Motor neuron (in vitro differentiated cells): ENCODE measurements at regions of chr5 and their contacts with region 1.

Region 1: DNA sequence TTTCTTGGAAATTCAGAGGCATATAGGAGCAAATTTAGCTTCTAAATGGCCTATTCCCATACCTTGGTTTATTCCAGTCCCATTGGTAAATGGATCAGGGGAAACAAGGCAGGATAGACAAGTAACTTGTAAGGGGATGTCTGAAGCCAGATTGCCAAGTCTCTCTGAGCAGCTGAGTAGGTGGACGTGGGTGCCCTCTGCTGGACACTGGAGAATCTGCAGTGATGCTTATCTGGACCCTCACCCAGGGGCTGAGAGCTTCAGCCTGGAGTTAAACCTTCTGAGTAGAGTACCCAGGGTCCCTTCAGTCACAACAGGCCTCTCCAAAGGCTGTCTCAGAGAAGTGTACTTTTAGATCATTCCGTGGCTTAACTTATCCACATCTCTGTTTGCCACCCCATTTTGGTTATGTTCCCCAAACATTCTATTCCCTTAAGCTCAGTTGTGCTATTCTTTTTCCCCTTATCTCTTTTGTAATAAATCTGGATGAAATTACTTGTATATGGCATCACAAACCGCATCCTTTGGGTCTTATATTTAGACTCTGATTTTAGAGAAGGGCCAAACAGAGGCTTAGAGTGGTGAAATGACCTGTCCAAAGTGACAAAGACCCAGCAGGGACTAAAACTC is 218.3 kb upstream of the GLRA1 start:
- ATAC-seq: peak; percentile 52 to 89 (median 74)
- H3K4me3 ChIP-seq: no peak overlapping the region
- H3K27ac ChIP-seq: no peak overlapping the region
- H3K4me1 ChIP-seq: peaks cover 29 to 42% of the 10 kb centered on the region in 2 donors

Region 2: DNA sequence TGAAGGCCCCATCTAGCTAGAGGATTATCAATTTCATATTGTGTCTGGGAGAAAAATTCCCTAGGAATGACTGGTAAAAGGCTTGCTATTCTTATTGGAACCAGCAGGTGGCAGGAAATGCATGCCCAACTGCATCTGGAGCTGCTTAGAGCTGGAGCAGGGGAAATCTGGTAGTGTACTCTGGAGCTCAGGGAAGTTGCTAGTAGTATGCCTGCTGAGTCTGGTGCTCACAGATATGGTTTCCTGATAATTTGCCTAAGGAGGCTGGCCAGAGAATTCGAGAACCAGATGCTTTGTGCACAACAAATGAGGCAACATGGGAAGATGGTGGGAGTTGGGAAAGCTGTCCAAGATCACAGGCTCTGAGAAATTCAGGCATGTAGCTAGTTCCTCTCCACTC is 317.5 kb before region 1 on chr5:
- in situ Hi-C with region 1: loop called in 5 of 9 experiments (anchors 10 to 25 kb)
- ATAC-seq: peak; percentile 82 to 96 (median 92)
- H3K4me3 ChIP-seq: no peak overlapping the region
- H3K27ac ChIP-seq: no peak overlapping the region
- H3K4me1 ChIP-seq: peaks cover 14 to 17% of the 10 kb centered on the region in 2 donors

Region 3: GRCh38 chr5:151924564-151925301 is 218.2 kb before region 1 on chr5 and contains the start of gene GLRA1:
- in situ Hi-C with region 1: loop called in 2 of 9 experiments (anchors 25 kb)
- ATAC-seq: peak; percentile 54 to 88 (median 68)
- H3K4me3 ChIP-seq: peak within 1 kb of the TSS; percentile 34 to 51 (median 49)
- H3K27ac ChIP-seq: peak within 1 kb of the TSS; percentile 67 to 78
- H3K4me1 ChIP-seq: peaks cover 32 to 47% of the 10 kb centered on the region in 2 donors
- total RNA-seq, gene GLRA1: 0.40 to 9.8 (median 4.9) TPM in 7 of 8 experiments, not detected in the other